Head of caudate nucleus (tissue), 42 donors: ENCODE measurements at regions of chr14 and their contacts with region 1.

Region 1: DNA sequence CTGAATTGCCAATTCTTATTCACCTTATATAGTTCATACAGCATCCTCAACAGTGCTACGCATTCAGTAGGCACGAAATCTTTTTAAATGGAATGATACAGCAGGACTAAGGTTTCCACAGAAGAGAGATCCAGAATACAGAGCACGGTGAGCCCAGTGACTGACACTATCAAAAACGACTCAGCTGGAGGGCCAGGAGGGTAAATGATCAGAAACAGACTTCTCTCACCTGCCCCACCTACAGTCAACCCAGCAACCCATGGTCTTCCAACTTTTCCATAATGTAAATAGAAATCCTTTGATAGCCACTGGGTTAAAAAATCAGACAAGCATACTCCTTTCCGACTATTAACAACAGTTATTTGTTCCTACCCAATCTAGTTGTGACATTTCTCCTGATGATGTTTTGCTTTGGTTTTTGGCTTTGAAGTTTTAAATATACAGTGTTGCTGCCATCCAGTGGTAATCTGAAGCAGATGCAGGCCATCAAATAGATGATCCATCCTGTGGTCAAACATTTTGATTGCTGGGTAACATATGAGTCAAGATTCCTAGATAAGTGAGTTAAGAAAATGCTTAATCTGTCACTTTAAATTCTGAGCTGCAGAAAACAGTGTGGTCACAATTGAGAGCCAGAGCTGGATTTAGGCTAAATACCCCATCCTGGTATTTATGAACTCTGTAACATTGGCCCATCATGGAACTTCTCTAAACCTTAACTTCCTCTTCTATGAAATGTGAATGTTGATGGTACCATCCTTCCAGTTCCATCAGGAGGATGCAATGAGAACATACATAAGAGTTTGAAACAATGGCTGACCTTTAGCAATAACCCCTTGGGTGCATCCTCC is 42.0 kb downstream of the GPHB5 start:
- DNase-seq: peak in 3 of 42 donors; percentile 14 to 47 (median 18)

Region 2: GRCh38 chr14:62162998-62163589 is 1113.6 kb before region 1 on chr14:
- intact Hi-C with region 1: loop called (anchors 10 kb)
- DNase-seq: peak in 26 of 42 donors; percentile 3 to 68 (median 26)

Region 3: DNA sequence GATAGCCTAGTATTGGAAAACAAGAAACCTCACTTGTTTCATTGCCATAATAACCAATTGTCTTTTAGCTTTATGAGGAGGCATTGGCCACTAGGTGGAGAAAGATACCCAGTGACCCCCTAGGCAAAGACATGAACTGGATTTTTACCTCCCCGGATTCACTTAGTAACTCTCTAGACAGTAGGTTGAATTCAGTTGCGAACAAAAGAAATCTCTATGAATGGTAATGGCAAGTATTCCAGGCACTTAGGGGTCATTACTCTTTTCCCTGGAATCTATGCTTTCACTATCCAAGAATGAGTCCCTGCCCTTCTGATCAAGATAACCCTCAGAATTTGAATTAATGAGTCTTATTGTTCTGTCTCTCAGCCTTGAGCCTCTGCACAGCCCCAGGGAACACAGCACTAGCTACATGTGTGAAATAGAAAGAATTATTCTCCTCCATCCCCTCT is 101.9 kb before region 1 on chr14:
- intact Hi-C with region 1: loop called (anchors 10 kb)
- DNase-seq: peak in 6 of 42 donors; percentile 11 to 56 (median 36)

Region 4: DNA sequence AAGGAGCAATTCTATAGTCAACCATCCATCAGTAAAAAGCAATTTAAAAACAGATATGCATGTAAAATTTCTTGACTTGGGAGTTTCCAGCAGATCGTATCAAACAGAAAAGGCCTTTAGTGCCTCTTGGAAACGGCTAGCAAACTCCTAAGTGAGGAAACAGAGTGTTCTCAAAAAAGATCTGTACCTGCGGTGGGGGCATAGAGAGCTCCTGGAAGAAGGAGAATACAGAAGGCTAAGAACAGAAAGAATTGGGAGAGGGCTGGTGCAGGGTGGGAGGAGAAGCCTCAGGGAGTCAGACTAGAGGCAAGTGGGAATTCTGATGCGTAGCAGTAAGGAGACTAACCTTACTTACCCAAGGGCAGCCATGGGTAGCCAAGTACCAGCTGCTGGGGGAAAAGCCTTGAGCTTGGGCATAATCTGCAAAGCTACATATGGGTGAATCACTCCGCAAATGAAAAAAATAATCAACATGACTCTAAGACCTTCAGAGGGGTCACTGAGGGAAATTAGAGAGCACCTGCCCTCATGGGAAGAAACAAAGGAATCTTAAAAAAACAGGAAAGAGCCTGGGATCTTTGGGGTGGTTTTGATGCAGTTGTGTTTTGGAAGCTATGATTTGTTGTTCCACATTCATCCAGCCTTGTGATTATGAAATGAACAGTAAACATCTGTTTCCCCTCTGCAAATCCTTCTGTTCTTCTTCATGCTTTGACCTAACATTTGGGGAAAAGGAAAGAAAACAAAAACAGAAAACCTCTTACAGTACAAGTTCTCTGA is 62.1 kb before region 1 on chr14:
- intact Hi-C with region 1: no loop called
- DNase-seq: no peak